ENCODE measurements at regions of chr4 and their contacts with region 1.

Region 1: GRCh38 chr4:498328-498904 is 540 bp downstream of the ZNF721 start:
- H3K4me3 Mint-ChIP-seq: peak overlapping the region; percentile 99
- H3K27ac Mint-ChIP-seq: peak overlapping the region; percentile 99
- H3K4me1 Mint-ChIP-seq: peaks cover 19% of the 10 kb centered on the region
- H3K27me3 Mint-ChIP-seq: no peaks in the 10 kb centered on the region

Region 2: GRCh38 chr4:337143-337931 is 161.1 kb before region 1 on chr4 and contains the start of gene ZNF141:
- intact Hi-C with region 1: loop called (anchors 1 kb)
- H3K4me3 Mint-ChIP-seq: peak within 1 kb of the TSS; percentile 99
- H3K27ac Mint-ChIP-seq: peak within 1 kb of the TSS; percentile 100
- H3K4me1 Mint-ChIP-seq: peaks cover 21% of the 10 kb centered on the region
- H3K27me3 Mint-ChIP-seq: peaks cover 4% of the 10 kb centered on the region

Region 3: GRCh38 chr4:473570-474457 is 24.6 kb before region 1 on chr4:
- intact Hi-C with region 1: loop called (anchors 2 kb)
- H3K4me3 Mint-ChIP-seq: peak overlapping the region; percentile 91
- H3K27ac Mint-ChIP-seq: peak overlapping the region; percentile 100
- H3K4me1 Mint-ChIP-seq: peaks cover 28% of the 10 kb centered on the region
- H3K27me3 Mint-ChIP-seq: no peaks in the 10 kb centered on the region

Region 4: DNA sequence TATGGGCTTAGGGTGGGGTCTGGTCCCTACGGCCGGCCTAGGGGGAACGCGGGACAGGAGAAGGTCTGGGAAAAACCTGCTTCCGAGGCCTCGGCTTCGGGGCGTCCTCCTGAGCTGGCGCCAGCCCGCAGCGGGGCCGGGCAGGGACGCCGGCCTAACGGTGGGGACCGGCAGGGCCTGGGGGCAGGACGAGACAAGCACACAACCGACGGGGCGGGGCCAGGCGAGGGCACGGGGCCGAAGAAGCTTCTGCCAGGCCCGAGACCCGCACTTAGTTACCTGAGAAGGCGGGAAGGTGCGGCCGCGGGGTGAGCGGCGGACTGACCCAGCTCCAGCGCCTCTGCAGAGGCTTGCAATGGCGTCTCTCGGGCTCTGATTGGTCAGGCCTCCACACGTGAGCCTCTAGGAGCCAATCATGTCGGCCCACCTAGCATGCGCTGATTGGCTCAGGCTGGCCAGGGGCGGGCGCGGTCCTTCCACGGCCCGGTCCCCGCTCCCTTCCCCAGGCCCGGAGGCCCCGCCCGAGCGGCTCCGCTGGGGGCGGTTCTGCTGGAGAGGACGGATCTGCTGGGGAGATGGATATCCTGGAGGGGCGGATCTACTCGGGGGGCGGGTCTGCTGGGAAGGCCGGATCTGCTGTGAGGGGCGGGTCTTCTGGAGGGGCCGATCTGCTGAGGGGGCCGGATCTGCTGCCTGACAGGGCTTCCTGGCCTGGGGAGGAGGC is 283.2 kb after region 1 on chr4:
- intact Hi-C with region 1: loop called (anchors 5 kb)
- H3K4me3 Mint-ChIP-seq: peak overlapping the region; percentile 87
- H3K27ac Mint-ChIP-seq: peak overlapping the region; percentile 93
- H3K4me1 Mint-ChIP-seq: peaks cover 73% of the 10 kb centered on the region
- H3K27me3 Mint-ChIP-seq: peaks cover 28% of the 10 kb centered on the region

Region 5: GRCh38 chr4:1116838-1117237 is 618.4 kb after region 1 on chr4:
- intact Hi-C with region 1: no loop called
- H3K4me3 Mint-ChIP-seq: no peak overlapping the region
- H3K27ac Mint-ChIP-seq: no peak overlapping the region
- H3K4me1 Mint-ChIP-seq: no peaks in the 10 kb centered on the region
- H3K27me3 Mint-ChIP-seq: peaks cover 44% of the 10 kb centered on the region

Measured in dendritic cell treated with granulocyte-macrophage colony-stimulating factor and Interleukin-4, amounts not matched to agents 40 ng/mL and 50 ng/mL, for 4 days (primary cell).